GM12878 (cell line): ENCODE measurements at regions of chr16 and their contacts with region 1.

Region 1: DNA sequence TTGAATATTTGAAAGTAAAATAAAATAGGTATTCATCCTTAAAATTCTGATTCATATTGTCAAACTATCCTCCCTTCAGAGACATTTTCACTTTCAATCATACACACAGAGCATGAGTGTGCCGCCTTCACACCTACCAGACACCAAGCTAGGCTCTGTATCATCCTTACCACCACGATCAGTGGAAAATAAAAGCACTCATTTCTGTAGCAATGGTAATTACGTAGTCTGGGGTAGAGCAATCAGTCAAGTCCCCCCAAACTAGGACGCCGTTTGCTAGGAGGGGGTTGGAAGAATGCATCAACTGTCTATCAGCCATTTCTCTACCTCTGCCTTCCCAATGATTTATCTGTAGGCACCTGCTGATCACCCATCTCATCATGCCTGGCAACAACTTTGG is 84.6 kb upstream of the GRIN2A start:
- DNase-seq: peak; percentile 54
- ATAC-seq: peak; percentile 98
- H3K4me3 ChIP-seq: no peak overlapping the region
- H3K27ac ChIP-seq: no peak overlapping the region
- H3K4me1 ChIP-seq: peaks cover 9% of the 10 kb centered on the region
- H3K27me3 ChIP-seq: no peaks in the 10 kb centered on the region
- CTCF ChIP-seq: no peak
- EP300 ChIP-seq: peak; percentile 5 to 63; a peak in 1 of 4 replicates
- POLR2A ChIP-seq: no peak
- RAD21 ChIP-seq: no peak

Region 2: DNA sequence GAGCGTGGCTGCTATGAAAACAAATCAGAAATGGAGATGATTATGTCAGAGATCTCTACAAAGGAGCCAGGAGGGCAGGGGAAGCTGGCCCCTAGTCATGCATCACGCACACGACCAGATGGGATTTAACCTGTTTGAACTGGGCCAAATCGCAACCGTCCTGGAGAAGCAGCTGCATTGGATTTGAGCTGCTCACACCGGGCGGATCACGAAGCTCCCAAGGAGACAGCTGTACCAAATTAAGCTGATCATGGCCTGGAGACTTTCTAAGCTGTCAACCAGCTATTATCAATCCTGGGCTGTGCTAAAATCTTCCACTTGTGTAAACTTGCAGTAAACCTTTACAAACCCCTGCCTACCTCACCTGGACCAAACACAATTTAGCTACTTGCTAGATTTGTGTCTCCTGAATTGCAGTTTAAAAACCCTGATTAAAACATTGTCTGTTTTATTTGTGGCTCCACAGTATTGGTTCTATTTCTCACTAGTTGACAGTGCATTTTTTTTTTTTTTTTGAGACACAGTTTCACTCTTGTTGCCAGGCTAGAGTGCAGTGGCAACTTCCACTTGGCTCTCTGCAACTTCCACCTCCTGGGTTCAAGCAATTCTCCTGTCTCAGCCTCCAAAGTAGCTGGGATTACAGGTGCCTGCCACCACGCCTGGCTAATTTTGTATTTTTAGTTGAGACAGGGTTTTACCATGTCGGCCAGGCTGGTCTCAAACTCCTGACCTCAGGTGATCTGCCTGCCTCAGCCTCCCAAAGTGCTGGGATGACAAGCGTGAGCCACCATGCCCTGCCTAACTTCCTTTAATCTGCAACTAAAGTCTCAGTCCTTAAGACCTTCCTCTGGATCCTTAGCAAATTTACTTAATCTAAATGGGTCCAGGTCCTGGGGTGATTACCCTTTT is 13.7 kb after region 1 on chr16:
- CTCF ChIA-PET with region 1: interaction called, 4 read pairs
- POLR2A ChIA-PET with region 1: interaction called, 3 read pairs
- RAD21 ChIA-PET with region 1: no interaction called
- SMC1A ChIA-PET with region 1: interaction called, 14 read pairs
- in situ Hi-C with region 1: no loop called
- intact Hi-C with region 1: no loop called
- DNase-seq: no peak
- ATAC-seq: peak; percentile 70
- H3K4me3 ChIP-seq: no peak overlapping the region
- H3K27ac ChIP-seq: no peak overlapping the region
- H3K4me1 ChIP-seq: peaks cover 18% of the 10 kb centered on the region
- H3K27me3 ChIP-seq: no peaks in the 10 kb centered on the region
- CTCF ChIP-seq: no peak
- EP300 ChIP-seq: no peak
- POLR2A ChIP-seq: no peak
- RAD21 ChIP-seq: no peak

Region 3: DNA sequence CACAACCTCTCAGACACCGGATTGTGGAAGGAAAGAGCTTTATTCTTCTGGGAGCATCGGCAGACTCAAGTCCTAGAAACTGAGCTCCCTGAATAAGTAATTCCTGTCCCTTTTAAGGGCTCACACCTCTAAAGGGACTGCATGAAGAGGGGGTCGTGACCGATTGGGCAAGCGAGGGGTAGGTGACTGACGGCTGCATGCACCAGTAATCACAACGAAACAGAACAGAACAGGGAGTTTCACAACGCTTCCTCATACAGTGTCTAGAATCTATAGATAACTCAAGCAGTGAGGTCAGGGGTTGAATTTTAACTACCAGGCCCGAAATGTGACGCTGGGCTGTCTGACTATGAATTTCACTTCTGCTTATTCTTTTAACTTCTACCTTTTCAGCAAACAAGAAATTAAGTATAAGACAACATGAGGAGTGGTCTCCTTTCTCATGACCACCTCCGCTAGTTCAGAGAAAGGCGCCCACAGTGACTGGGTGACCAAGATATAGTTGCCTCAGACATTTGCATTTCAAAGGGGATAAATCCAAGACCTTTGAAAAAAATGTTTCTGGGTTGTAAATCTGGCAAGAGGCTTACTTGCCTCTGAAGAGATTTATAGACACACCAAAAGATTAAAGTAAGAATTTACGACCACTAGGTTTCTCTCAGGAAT is 30.7 kb after region 1 on chr16:
- CTCF ChIA-PET with region 1: interaction called, 5 read pairs
- POLR2A ChIA-PET with region 1: interaction called, 4 read pairs
- RAD21 ChIA-PET with region 1: interaction called, 19 read pairs
- SMC1A ChIA-PET with region 1: interaction called, 17 read pairs
- in situ Hi-C with region 1: no loop called
- intact Hi-C with region 1: loop called (anchors 2 kb)
- DNase-seq: peak; percentile 98
- ATAC-seq: peak; percentile 98
- H3K4me3 ChIP-seq: peak overlapping the region; percentile 50; the same call in 1 of the 2 replicates
- H3K27ac ChIP-seq: peak overlapping the region; percentile 99
- H3K4me1 ChIP-seq: peaks cover 31% of the 10 kb centered on the region
- H3K27me3 ChIP-seq: no peaks in the 10 kb centered on the region
- CTCF ChIP-seq: no peak
- EP300 ChIP-seq: peak; percentile 94 to 96; a peak in 3 of 4 replicates
- POLR2A ChIP-seq: peak; percentile 39; the same call in 1 of the 2 replicates
- RAD21 ChIP-seq: no peak

Region 4: GRCh38 chr16:10385725-10386516 is 119.1 kb after region 1 on chr16 and contains the start of gene ATF7IP2:
- CTCF ChIA-PET with region 1: no interaction called
- POLR2A ChIA-PET with region 1: no interaction called
- RAD21 ChIA-PET with region 1: no interaction called
- SMC1A ChIA-PET with region 1: no interaction called
- in situ Hi-C with region 1: loop called (anchors 10 kb)
- intact Hi-C with region 1: no loop called
- DNase-seq: peak; percentile 80
- ATAC-seq: peak; percentile 97
- H3K4me3 ChIP-seq: peak within 1 kb of the TSS; percentile 80
- H3K27ac ChIP-seq: peak within 1 kb of the TSS; percentile 80
- H3K4me1 ChIP-seq: peaks cover 7% of the 10 kb centered on the region
- H3K27me3 ChIP-seq: no peaks in the 10 kb centered on the region
- CTCF ChIP-seq: no peak
- EP300 ChIP-seq: peak in 1 of 2 experiments; percentile 25; a peak in 1 of 4 replicates
- POLR2A ChIP-seq: peak; percentile 100
- RAD21 ChIP-seq: no peak
- polyA plus RNA-seq, gene ATF7IP2: 67.9 to 75.2 TPM